HCT116 (cell line): ENCODE measurements at regions of chr4 and their contacts with region 1.

Region 1: DNA sequence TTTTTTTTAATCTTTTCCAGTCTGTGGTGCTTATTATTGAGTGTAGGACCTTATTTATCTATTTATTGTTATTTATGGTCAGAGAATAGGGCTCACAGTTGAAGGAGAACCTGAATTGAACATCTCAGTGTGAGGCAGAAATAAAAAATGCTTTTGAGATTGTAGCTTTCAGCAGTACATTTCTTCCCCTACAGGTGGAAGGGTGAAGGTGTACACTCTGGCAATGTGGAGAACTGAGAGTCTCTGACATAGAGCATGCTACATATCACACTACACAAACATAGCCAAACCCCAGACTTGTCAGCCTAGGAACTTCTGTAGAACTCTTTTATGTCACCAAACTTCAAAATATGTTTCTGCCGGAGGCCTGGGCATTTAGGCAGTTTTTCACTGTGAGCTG is 140.2 kb downstream of the STIM2 start:
- DNase-seq: no peak
- ATAC-seq: peak; percentile 94
- H3K4me3 ChIP-seq: no peak overlapping the region
- H3K27ac ChIP-seq: no peak overlapping the region
- H3K4me1 ChIP-seq: peaks cover 0 to 6% of the 10 kb centered on the region in 2 experiments; a peak in 1 of 4 replicates
- H3K27me3 ChIP-seq: no peaks in the 10 kb centered on the region
- CTCF ChIP-seq: peak in 2 of 3 experiments; percentile 44 to 50; a peak in 4 of 6 replicates
- POLR2A ChIP-seq: no peak
- RAD21 ChIP-seq: peak; percentile 47

Region 2: DNA sequence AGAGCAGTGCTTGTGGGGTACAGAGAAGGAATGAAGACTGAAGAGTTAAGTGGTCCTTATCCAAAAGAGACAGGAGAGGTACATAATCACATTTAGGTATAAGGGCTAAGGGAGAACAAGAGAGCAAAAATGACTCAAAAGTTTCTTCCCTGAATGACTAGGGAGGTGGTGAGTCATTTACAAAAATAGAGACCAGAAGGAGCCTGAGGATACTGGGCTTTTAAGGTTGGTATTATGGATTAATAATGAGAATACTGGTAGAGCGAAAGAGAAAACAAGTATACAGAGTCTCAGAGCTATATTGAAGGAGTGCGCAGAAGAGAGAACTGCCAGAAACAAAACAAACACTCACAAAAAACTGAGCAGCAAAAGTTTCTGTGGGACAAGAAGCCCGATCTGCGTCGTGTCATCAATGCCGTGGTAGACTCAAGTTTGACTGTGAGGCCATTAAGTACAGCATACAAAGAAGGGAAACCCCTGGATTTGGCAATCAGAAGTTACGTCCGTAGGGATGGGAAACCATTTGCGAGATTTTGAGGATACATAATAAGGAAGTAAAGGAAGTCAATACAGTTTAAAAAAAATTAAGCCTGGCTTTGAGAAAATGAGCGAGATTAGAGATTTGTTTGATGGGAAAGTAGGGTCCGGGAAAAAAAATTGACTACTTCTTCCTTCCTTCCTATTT is 269.3 kb before region 1 on chr4:
- CTCF ChIA-PET with region 1: no interaction called
- POLR2A ChIA-PET with region 1: no interaction called
- RAD21 ChIA-PET with region 1: no interaction called
- intact Hi-C with region 1: loop called (anchors 10 kb)
- DNase-seq: no peak
- ATAC-seq: no peak
- H3K4me3 ChIP-seq: no peak overlapping the region
- H3K27ac ChIP-seq: no peak overlapping the region
- H3K4me1 ChIP-seq: peaks cover 9 to 12% of the 10 kb centered on the region in 2 experiments
- H3K27me3 ChIP-seq: no peaks in the 10 kb centered on the region
- CTCF ChIP-seq: no peak
- POLR2A ChIP-seq: no peak
- RAD21 ChIP-seq: no peak

Region 3: GRCh38 chr4:26793735-26794134 is 207.1 kb before region 1 on chr4:
- CTCF ChIA-PET with region 1: no interaction called
- POLR2A ChIA-PET with region 1: no interaction called
- RAD21 ChIA-PET with region 1: no interaction called
- intact Hi-C with region 1: loop called (anchors 10 kb)
- DNase-seq: peak; percentile 7
- ATAC-seq: 0 out of 2 replicates have a peak, but pooled peaks have one; percentile 42
- H3K4me3 ChIP-seq: no peak overlapping the region
- H3K27ac ChIP-seq: no peak overlapping the region
- H3K4me1 ChIP-seq: peaks cover under 1 to 6% of the 10 kb centered on the region in 2 experiments
- H3K27me3 ChIP-seq: no peaks in the 10 kb centered on the region
- CTCF ChIP-seq: no peak
- POLR2A ChIP-seq: no peak
- RAD21 ChIP-seq: no peak

Region 4: GRCh38 chr4:27198971-27199370 is 198.2 kb after region 1 on chr4:
- CTCF ChIA-PET with region 1: no interaction called
- POLR2A ChIA-PET with region 1: no interaction called
- RAD21 ChIA-PET with region 1: no interaction called
- intact Hi-C with region 1: no loop called
- DNase-seq: no peak
- ATAC-seq: no peak
- H3K4me3 ChIP-seq: no peak overlapping the region
- H3K27ac ChIP-seq: no peak overlapping the region
- H3K4me1 ChIP-seq: no peaks in the 10 kb centered on the region
- H3K27me3 ChIP-seq: no peaks in the 10 kb centered on the region
- CTCF ChIP-seq: no peak
- POLR2A ChIP-seq: no peak
- RAD21 ChIP-seq: no peak